HEK293T (cell line): ENCODE measurements at regions of chr5 and their contacts with region 1.

Region 1: GRCh38 chr5:177403792-177404640 is 3.6 kb upstream of the PFN3 start:
- DNase-seq: peak; percentile 86

Region 2: GRCh38 chr5:177311723-177312648 is 92.0 kb before region 1 on chr5 and contains the start of gene MXD3:
- CTCF ChIA-PET with region 1: interaction called, 11 read pairs
- POLR2A ChIA-PET with region 1: no interaction called
- DNase-seq: peak; percentile 98

Region 3: GRCh38 chr5:177378884-177379883 is 24.8 kb before region 1 on chr5:
- CTCF ChIA-PET with region 1: interaction called, 14 read pairs
- POLR2A ChIA-PET with region 1: interaction called, 3 read pairs
- DNase-seq: no peak

Region 4: GRCh38 chr5:177425801-177426565 is 22.0 kb after region 1 on chr5:
- CTCF ChIA-PET with region 1: interaction called, 23 read pairs
- POLR2A ChIA-PET with region 1: interaction called, 46 read pairs
- DNase-seq: peak; percentile 100

Region 5: DNA sequence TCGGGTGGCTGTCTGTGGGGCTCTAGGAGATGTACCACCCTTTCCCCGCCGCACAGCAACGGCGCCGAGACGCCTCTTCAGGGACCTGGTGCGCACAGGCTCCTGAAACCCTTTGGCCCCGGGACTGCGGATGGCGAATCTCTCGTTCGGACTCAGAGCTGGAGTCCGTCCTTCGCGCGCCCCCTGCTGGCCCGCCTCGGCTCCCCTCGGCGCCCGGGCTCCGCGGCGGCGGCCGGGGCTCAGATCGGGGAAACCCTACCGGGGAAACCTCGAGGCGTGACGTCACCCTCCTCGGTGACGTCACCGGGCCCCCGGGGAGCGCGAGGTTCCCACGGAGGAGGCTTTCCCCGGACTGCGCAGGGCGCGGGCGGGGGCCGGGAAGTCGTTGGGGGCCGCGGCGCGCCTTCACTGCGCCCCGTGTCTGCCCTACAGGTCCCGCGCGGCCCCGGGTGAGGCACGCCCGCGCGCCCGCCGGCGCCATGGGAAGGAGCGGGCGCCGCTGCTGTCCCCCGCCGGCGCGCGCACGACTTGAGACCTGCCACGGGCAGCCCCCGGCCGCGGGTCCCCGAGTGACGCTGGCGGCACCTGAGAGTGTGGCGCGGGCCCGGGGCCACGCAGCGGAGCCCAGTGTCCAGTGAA is 50.5 kb after region 1 on chr5:
- CTCF ChIA-PET with region 1: interaction called, 50 read pairs
- POLR2A ChIA-PET with region 1: interaction called, 34 read pairs
- DNase-seq: peak; percentile 96